ENCODE measurements at regions of chr10 and their contacts with region 1.

Region 1: DNA sequence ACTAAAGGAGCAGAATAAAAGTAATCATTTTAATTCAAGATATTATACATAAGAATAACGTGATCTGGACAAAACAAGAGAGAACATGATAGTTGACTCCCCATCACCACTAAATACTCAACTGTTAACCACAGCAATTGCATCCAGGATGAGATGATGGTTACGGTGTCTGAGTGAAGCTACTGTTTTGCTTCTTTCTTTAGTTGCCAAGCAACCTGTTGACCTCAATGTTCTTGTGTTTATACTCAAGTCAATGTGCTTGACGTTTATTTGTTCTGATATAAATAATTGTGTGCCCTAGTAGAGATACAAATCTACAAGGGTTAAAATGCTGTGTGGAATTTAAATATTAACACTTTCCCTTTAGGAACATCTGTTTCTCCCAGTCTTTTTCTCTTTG is 31.4 kb upstream of the MPP7 start:
- DNase-seq: no peak
- ATAC-seq: peak; percentile 56
- H3K4me3 Mint-ChIP-seq: peak overlapping the region; percentile 79
- H3K27ac Mint-ChIP-seq: peak overlapping the region; percentile 97
- H3K4me1 Mint-ChIP-seq: peaks cover 46% of the 10 kb centered on the region
- H3K27me3 Mint-ChIP-seq: no peaks in the 10 kb centered on the region
- CTCF ChIP-seq: no peak

Region 2: DNA sequence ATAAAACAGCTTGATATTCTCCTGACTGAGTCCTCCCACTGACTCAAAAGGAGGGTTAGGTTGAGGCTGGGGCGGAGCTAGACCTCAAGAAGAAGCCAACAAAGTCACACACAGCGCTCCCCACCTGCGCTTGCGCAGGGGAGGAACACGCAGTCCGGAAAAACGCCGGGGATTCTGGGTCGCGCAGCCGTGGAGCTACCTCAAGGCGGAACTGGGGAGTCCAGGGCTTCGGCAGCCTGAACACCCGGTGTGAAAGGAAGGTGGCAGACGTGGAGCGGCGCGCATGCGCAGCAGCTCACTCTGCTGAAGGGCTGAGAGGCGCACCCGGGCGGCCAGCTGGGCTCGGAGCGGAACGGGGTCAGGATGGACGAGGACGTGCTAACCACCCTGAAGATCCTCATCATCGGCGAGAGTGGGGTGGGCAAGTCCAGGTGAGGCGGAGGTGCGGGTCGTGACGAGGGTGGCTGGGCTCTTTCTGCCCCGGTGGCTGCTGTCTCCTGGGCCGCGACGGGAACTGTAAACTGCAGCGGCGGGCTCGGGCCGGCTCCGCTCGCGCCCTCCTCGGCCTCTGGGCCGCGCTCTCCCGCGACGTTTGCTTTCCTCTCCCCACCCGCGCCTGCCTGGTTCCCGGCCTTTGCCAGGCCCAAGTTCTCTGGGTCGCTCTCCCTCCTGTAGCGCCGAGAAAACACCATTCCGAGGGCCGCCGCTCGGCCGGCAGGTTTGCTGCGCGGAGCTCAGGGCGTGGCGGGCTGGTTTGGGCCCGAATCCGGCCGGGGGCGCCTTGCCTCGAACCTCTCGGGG is 830.1 kb before region 1 on chr10 and contains the start of gene RAB18:
- CTCF ChIA-PET with region 1: no interaction called
- POLR2A ChIA-PET with region 1: no interaction called
- intact Hi-C with region 1: loop called (anchors 1 kb)
- DNase-seq: peak; percentile 93
- ATAC-seq: peak; percentile 96
- H3K4me3 Mint-ChIP-seq: peak within 1 kb of the TSS; percentile 100
- H3K27ac Mint-ChIP-seq: peak within 1 kb of the TSS; percentile 99
- H3K4me1 Mint-ChIP-seq: peaks cover 41% of the 10 kb centered on the region
- H3K27me3 Mint-ChIP-seq: no peaks in the 10 kb centered on the region
- CTCF ChIP-seq: no peak
- total RNA-seq, gene RAB18: 48.3 and 55.6 TPM in 2 replicates

Region 3: GRCh38 chr10:28317760-28318159 is 16.5 kb before region 1 on chr10:
- CTCF ChIA-PET with region 1: interaction called, 3 read pairs
- POLR2A ChIA-PET with region 1: interaction called, 9 read pairs
- intact Hi-C with region 1: loop called (anchors 1 kb)
- DNase-seq: no peak
- ATAC-seq: no peak
- H3K4me3 Mint-ChIP-seq: no peak overlapping the region
- H3K27ac Mint-ChIP-seq: no peak overlapping the region
- H3K4me1 Mint-ChIP-seq: peaks cover 4% of the 10 kb centered on the region
- H3K27me3 Mint-ChIP-seq: peaks cover 4% of the 10 kb centered on the region
- CTCF ChIP-seq: no peak

Region 4: GRCh38 chr10:28403090-28403489 is 68.8 kb after region 1 on chr10:
- CTCF ChIA-PET with region 1: no interaction called
- POLR2A ChIA-PET with region 1: interaction called, 3 read pairs
- intact Hi-C with region 1: loop called (anchors 2 kb)
- DNase-seq: no peak
- ATAC-seq: no peak
- H3K4me3 Mint-ChIP-seq: peak overlapping the region; percentile 15
- H3K27ac Mint-ChIP-seq: peak overlapping the region; percentile 83
- H3K4me1 Mint-ChIP-seq: peaks cover 36% of the 10 kb centered on the region
- H3K27me3 Mint-ChIP-seq: no peaks in the 10 kb centered on the region
- CTCF ChIP-seq: no peak

Region 5: GRCh38 chr10:28558923-28559508 is 224.7 kb after region 1 on chr10:
- CTCF ChIA-PET with region 1: no interaction called
- POLR2A ChIA-PET with region 1: no interaction called
- intact Hi-C with region 1: no loop called
- DNase-seq: no peak
- ATAC-seq: no peak
- H3K4me3 Mint-ChIP-seq: no peak overlapping the region
- H3K27ac Mint-ChIP-seq: peak overlapping the region; percentile 2
- H3K4me1 Mint-ChIP-seq: peaks cover 71% of the 10 kb centered on the region
- H3K27me3 Mint-ChIP-seq: no peaks in the 10 kb centered on the region
- CTCF ChIP-seq: no peak

Measured in activated B cell treated with CpG ODN at 0.5 μM for 24 hours (primary cell).